Psoas muscle (tissue), 8 donors: ENCODE measurements at regions of chr18 and their contacts with region 1.

Region 1: DNA sequence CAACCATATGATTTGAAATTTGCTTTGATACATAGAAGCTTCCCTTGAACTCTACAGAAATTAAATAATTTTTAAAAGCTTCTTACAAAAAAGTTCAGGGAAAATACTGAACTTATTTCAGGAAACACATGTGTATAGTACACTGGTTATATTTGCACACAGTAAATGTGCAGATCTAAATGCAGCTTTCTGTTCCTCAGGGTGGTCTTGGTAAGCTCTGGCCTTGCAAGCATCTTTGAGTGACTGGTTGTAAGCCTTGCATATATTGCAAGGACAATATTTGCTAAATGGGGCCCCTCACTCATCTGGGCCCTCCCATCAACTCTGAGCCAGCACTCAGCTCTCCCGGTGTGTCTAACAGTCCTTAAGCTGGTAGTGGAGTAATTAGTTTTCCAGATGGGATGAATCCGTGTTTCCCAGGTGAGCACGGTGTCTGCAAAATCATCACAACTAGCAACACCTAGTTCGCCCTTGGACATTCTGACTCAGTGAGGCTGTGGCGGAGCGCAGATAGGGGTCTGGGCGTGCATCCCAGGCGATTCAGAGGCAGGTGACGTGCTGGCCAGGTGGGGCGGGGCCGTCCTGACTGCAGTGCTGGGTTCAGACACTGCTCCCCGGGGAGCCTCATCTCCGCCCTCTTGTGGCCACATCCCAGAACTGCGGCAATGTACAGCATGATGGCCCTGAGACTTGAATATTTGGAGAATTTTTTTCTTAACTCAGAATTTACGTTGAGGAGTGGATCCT is 149.6 kb downstream of the MBP start:
- DNase-seq: peak; percentile 79 to 88
- ATAC-seq: peak; percentile 86 to 93 (median 90)
- H3K4me3 ChIP-seq: no peak overlapping the region
- H3K27ac ChIP-seq: no peak overlapping the region
- H3K4me1 ChIP-seq: peaks cover 2% of the 10 kb centered on the region
- H3K27me3 ChIP-seq: no peaks in the 10 kb centered on the region
- CTCF ChIP-seq: peak; percentile 91

Region 2: DNA sequence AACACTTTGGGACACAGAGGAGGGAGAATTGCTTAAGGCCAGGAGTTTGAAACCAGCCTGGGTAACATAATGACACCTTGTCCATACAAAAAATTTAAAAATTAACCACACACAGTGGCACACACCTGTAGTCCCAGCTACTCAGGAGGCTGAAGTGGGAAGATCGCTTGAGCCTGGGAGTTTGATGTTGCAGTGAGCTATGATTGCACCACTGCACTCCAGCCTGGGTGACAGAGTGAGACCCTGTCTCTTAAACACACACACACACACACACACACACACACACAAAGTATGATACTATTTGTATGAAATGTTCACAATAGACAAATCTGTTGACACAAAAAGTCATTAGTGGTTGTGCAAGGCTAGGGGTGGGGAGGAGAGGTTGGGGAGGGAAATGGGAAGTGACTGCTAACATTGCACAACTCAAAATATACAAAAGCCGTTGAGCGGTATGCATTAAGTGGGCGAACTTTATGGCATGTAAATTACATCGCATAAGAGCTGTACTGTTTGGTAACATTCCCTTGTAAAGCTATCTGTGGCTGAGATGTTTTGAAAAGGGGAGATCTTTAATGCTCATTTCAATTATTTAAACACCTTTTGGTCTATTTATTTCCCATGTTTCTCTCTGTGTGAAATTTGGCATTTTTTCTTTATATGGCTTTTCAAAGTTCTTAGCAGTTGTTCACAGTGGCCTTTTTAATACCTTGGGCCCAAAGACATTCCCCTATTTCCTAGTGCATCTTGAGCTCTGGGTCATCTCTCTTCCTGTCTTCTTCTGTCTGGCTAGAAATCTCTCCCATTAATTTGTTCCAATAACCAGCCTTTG is 429.1 kb before region 1 on chr18:
- intact Hi-C with region 1: no loop called
- DNase-seq: no peak
- ATAC-seq: no peak
- H3K4me3 ChIP-seq: no peak overlapping the region
- H3K27ac ChIP-seq: no peak overlapping the region
- H3K4me1 ChIP-seq: no peaks in the 10 kb centered on the region
- H3K27me3 ChIP-seq: no peaks in the 10 kb centered on the region
- CTCF ChIP-seq: no peak

Region 3: DNA sequence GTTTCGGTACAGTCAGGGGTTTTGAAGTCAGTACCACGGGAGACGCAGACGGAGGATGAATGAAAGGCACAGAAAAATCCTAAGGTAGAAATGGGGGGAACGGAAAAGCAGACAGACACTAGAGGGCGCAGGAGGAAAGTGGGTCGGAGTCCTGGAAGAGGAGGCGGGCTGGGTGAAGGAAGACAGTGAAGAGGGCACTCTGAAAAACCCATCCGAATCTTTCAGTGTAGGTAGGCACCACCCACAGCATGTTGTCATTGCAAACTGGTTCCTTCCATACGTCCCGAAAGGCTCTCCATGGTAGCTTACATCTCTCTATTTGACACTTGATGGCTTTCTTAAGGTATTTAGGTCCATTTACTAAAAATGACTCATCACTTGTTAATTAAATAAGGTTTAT is 179.2 kb before region 1 on chr18:
- intact Hi-C with region 1: loop called (anchors 5 kb)
- DNase-seq: peak in 1 of 2 donors; percentile 47
- ATAC-seq: peak; percentile 55 to 81 (median 77)
- H3K4me3 ChIP-seq: no peak overlapping the region
- H3K27ac ChIP-seq: no peak overlapping the region
- H3K4me1 ChIP-seq: peaks cover 3% of the 10 kb centered on the region
- H3K27me3 ChIP-seq: peaks cover 0 to 4% (median 0%) of the 10 kb centered on the region in 3 donors
- CTCF ChIP-seq: peak; percentile 73

Region 4: GRCh38 chr18:76922107-76922506 is 60.9 kb before region 1 on chr18:
- intact Hi-C with region 1: loop called (anchors 1 to 5 kb)
- DNase-seq: peak; percentile 32 to 72
- ATAC-seq: peak; percentile 83 to 92 (median 90)
- H3K4me3 ChIP-seq: no peak overlapping the region
- H3K27ac ChIP-seq: no peak overlapping the region
- H3K4me1 ChIP-seq: peaks cover under 1% of the 10 kb centered on the region
- H3K27me3 ChIP-seq: no peaks in the 10 kb centered on the region
- CTCF ChIP-seq: peak; percentile 55

Region 5: GRCh38 chr18:76932026-76932819 is 50.8 kb before region 1 on chr18:
- intact Hi-C with region 1: loop called in 1 of 2 experiments (anchors 5 kb)
- DNase-seq: peak; percentile 76 to 88
- ATAC-seq: peak; percentile 97 to 99 (median 98)
- H3K4me3 ChIP-seq: no peak overlapping the region
- H3K27ac ChIP-seq: peak overlapping the region; percentile 85
- H3K4me1 ChIP-seq: peaks cover 20% of the 10 kb centered on the region
- H3K27me3 ChIP-seq: no peaks in the 10 kb centered on the region
- CTCF ChIP-seq: no peak

Region 6: GRCh38 chr18:76960528-76961035 is 22.4 kb before region 1 on chr18:
- intact Hi-C with region 1: loop called in 1 of 2 experiments (anchors 1 kb)
- DNase-seq: no peak
- ATAC-seq: no peak
- H3K4me3 ChIP-seq: no peak overlapping the region
- H3K27ac ChIP-seq: no peak overlapping the region
- H3K4me1 ChIP-seq: no peaks in the 10 kb centered on the region
- H3K27me3 ChIP-seq: no peaks in the 10 kb centered on the region
- CTCF ChIP-seq: no peak

Region 7: GRCh38 chr18:77032181-77032701 is 49.2 kb after region 1 on chr18:
- intact Hi-C with region 1: no loop called
- DNase-seq: no peak
- ATAC-seq: peak in 3 of 4 donors; percentile 33 to 42 (median 39)
- H3K4me3 ChIP-seq: no peak overlapping the region
- H3K27ac ChIP-seq: no peak overlapping the region
- H3K4me1 ChIP-seq: no peaks in the 10 kb centered on the region
- H3K27me3 ChIP-seq: no peaks in the 10 kb centered on the region
- CTCF ChIP-seq: no peak